ENCODE measurements at regions of chr1 and their contacts with region 1.

Region 1: DNA sequence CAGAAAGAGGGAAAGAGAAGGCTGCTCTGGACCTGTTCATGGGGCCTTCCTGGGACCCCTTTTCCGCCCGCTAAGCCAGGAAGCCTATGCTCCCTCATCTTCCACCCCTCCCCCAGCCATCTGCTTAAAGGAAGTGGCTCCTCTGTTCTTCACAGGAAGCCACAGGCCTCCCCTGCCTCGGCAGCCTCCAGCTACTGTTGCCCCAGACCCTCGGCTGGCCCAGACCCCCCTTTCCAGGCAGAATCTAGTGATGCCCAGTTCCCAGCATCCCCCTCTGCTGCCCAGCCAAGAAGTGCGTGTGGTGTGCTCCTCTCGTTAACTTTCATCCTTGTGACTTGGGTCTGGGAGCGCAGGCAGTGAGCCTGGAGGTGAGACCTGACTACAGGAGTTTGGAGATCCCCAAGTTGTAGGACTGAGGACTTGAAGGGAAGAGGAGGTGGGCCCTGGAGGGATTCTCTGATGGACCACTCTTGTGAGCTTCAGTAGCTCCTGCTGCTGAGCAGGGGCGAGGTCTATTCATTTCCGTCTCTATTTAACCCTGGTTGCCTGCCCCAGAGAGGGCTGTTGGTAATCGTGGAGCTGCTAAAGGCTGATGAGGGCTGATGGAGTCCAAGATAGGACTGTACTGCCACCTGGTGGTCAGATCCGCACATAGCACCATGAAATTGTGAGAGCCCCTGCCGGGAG is 9.1 kb downstream of the IFI6 start:
- DNase-seq: no peak
- H3K4me3 ChIP-seq: no peak overlapping the region
- CTCF ChIP-seq: peak; percentile 79

Region 2: GRCh38 chr1:27357281-27358037 is 305.4 kb before region 1 on chr1:
- CTCF ChIA-PET with region 1: interaction called, 10 read pairs
- POLR2A ChIA-PET with region 1: no interaction called
- DNase-seq: no peak
- H3K4me3 ChIP-seq: no peak overlapping the region
- CTCF ChIP-seq: peak; percentile 92

Region 3: GRCh38 chr1:27416387-27417111 is 246.3 kb before region 1 on chr1:
- CTCF ChIA-PET with region 1: interaction called, 19 read pairs
- POLR2A ChIA-PET with region 1: no interaction called
- DNase-seq: no peak
- H3K4me3 ChIP-seq: no peak overlapping the region
- CTCF ChIP-seq: peak; percentile 61

Region 4: GRCh38 chr1:27489501-27489909 is 173.3 kb before region 1 on chr1:
- CTCF ChIA-PET with region 1: no interaction called
- POLR2A ChIA-PET with region 1: no interaction called
- DNase-seq: no peak
- H3K4me3 ChIP-seq: peak overlapping the region; percentile 72
- CTCF ChIP-seq: no peak

Region 5: DNA sequence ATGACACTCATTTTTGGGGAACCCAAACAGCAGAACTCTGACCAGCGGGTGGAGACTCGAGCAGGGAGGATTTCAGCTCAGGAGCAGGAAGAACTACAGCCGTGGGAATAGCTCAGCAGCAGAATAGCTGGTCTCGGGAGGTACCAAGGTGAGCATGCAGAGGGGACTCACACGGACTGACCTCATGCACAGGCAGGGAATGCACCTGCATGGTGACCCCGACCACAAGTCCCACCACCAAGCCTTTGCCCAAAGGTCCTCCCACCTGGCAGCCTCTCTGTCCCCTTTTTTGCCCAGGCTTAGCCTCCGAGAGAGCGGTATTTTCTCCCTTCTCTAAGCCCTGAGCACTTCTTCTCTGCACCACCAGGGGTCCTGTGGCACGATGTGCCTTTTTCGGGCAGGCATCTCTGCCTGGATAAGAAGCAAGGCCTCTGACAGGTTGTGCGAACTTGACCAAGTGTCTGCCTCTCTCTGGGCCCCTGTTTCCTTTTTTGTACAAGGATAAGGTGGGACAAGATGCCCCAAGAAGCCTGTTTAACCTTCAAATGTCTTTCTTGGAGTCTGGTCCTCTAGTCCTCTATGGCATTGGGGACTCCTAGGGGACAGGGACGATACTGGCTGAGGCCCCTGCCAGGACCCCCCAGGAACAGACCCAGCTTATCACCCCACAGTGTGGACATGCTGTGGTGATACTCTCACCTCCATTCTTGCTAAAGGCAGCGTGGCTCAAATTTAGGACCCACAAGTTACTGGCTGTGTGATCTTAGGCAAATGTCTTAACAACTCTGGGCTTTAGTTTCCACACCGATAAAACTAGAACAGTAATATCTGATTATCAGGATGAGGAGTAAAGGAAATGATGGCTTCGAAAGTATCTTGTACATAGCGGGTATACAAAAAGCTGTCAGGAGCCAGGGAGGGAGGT is 18.9 kb before region 1 on chr1:
- CTCF ChIA-PET with region 1: interaction called, 36 read pairs
- POLR2A ChIA-PET with region 1: no interaction called
- DNase-seq: no peak
- H3K4me3 ChIP-seq: no peak overlapping the region
- CTCF ChIP-seq: peak; percentile 79

Region 6: DNA sequence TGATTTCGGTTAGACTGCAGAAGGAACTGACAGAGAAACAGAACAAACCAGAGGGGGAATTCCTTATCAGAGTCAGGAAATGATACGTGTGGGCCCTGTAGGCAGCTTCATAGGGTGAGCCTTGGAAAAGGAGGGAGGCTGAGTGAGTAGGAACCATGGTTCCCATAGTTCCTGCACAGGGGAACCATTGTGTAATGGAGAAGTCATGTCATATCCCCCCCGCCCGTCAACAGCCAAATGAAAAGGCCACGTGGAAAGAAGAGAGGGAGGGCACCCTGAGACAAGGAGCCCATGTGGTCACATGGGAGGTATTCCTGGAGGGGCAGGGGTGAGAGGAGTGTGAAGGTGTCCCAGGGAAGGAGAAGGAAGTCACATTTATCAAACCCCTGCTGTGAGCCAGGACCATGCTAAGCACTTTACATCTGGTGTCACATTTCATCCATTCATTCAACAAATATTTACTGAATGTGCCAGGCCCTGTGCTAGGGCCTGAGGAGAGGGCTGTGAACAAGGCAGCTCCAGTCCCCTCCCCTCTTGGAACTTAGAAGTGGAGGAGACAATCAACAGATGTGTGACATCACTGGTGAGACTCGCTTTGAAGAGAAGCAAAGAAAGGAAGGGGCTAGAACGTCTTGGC is 12.2 kb before region 1 on chr1:
- CTCF ChIA-PET with region 1: interaction called, 17 read pairs
- POLR2A ChIA-PET with region 1: no interaction called
- DNase-seq: no peak
- H3K4me3 ChIP-seq: no peak overlapping the region
- CTCF ChIP-seq: no peak

Region 7: DNA sequence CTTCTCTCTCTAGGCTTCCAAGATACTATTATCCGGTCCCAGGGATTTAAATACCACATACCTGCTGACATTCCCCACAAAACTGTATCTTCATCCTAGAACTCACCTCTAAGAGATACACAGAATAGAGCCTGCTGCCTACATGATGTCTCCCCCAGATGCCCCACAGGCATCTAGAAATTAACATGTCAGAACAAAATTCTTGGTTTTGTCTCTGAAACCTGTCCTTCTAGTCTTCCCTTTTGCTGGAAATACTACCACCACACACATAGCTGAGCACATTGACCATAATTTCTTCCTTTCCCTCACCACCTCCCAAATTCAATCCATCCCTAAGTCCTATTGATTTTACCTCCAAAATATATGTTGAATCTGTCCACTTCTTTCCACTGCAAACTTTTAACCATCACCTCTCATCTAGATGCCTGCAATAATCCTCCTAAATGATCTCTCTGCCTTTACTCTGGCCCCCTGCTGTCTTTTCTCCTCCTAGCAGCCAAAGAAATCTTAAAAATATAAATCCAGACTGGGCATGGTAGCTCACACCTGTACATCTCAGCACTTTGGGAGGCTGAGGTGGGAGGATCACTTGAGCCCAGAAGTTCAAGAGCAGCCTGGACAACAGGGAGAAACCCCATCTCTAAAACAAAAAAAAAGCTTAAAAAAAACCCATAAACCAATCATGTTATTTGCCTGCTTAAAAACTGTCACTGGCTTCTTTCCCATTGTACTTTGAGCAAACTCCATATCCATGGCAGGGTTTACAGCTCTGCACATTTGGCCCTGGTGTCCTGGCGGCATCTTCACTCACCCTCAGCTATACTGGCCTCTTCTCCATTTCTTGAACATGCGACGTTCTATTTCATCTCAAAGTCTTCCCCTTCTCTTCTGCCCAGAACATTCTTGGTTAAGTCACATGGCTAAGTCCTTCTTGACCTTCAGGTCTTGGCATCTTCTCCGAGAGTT is 56.7 kb after region 1 on chr1:
- CTCF ChIA-PET with region 1: interaction called, 10 read pairs
- POLR2A ChIA-PET with region 1: no interaction called
- DNase-seq: no peak
- H3K4me3 ChIP-seq: no peak overlapping the region
- CTCF ChIP-seq: peak; percentile 18

Measured in AG04449 (cell line).